Aorta (tissue), 5 donors: ENCODE measurements at regions of chr11 and their contacts with region 1.

Region 1: DNA sequence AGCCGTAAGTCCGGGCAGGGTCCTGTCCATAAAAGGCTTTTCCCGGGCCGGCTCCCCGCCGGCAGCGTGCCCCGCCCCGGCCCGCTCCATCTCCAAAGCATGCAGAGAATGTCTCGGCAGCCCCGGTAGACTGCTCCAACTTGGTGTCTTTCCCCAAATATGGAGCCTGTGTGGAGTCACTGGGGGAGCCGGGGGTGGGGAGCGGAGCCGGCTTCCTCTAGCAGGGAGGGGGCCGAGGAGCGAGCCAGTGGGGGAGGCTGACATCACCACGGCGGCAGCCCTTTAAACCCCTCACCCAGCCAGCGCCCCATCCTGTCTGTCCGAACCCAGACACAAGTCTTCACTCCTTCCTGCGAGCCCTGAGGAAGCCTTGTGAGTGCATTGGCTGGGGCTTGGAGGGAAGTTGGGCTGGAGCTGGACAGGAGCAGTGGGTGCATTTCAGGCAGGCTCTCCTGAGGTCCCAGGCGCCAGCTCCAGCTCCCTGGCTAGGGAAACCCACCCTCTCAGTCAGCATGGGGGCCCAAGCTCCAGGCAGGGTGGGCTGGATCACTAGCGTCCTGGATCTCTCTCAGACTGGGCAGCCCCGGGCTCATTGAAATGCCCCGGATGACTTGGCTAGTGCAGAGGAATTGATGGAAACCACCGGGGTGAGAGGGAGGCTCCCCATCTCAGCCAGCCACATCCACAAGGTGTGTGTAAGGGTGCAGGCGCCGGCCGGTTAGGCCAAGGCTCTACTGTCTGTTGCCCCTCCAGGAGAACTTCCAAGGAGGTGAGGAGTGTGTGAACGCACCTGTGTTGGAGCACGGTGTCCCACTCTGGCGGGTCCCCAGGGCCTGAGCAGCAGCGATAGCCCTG is at the start of gene TAGLN:
- DNase-seq: peak; percentile 95 to 97
- ATAC-seq: peak; percentile 86
- H3K4me3 ChIP-seq: peak within 1 kb of the TSS; percentile 46 to 98
- H3K27ac ChIP-seq: peak within 1 kb of the TSS; percentile 94 to 99
- H3K4me1 ChIP-seq: no peaks in the 10 kb centered on the region
- H3K27me3 ChIP-seq: no peaks in the 10 kb centered on the region
- total RNA-seq, gene TAGLN: 4,857 to 10,188 TPM

Region 2: DNA sequence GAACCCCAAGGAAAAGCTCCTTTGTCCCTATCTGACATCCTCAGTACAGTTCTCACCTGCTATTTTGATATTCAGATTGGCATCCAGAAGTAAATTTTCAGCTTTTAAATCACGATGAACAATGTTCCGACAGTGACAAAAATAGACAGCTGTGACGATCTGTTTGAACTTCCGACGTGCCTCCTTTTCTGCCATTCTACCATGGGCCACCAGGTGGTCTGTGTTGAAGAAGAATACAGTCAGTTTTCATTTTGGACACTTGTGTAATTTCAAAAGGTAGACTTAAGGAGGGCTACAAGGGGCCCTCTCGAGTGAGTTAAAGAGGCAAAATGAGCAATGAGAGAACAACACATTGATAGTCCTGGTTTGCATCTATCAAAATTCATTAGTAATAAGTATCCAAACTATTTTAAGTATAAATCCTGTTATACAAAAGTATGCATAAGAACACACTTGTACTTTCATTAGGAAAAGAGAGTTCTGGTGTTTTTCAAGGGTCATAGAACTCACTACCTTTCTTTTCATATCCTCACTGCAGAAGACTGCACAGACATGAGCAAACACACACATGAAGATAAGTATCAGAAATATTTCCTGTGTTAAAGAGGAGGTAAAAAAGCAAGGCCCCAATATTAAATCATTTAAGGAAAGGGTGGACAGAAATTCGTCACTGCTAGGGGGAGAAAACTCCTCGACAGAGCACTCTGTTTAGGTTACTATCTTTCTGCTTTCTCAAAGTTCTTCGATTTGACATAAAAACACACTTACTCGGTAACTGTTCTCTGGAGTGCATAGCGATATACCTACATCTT is 271.9 kb before region 1 on chr11:
- intact Hi-C with region 1: no loop called
- DNase-seq: no peak
- ATAC-seq: no peak
- H3K4me3 ChIP-seq: no peak overlapping the region
- H3K27ac ChIP-seq: no peak overlapping the region
- H3K4me1 ChIP-seq: no peaks in the 10 kb centered on the region
- H3K27me3 ChIP-seq: no peaks in the 10 kb centered on the region

Region 3: DNA sequence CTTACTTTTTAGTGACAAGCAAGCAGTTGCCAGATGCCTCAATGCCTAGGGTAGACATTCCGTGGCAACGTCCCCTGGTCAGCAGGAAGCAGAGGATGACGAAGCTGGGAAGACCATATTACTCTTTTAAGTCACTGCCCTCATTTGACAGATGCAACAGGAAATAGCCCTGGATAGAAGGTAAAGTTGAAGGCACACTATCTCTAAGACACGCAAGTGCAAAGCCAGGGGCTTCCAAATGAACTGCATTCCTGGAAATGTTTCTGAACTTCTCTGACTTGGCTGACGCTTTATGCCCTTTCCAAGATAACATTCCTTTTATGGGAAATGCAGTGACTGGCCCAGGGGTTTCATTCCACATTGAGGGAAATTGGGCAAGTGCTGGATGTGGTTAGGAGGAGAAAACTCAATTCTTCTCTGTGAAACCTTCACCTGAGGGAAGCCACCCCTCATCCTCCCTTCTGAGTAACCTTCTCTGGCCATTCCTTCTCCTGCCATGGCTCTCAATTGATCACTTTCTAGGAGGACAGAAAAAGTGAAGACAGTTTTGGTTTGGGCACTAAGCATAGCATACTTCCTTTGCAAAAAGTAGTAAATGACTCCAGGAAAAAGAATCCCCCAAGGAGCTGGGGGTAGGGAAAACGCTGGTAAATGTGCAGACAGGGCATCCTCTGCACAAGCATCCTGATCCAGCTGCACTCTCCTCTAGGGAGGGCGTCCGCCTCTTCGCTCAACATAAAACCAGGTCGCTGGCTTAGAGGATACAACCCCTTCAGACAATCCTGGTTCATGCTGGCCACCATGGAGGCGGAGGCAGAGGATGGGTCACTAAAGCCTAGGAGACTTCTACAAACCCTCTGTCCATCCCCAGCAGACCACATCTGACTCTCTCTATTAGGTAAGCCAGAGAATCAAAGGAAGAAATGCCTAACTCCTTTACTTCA is 18.1 kb after region 1 on chr11:
- intact Hi-C with region 1: loop called (anchors 1 to 2 kb)
- DNase-seq: peak in 1 of 2 donors; percentile 69
- ATAC-seq: peak; percentile 31
- H3K4me3 ChIP-seq: no peak overlapping the region
- H3K27ac ChIP-seq: peak overlapping the region; percentile 51 to 100
- H3K4me1 ChIP-seq: peaks cover 4 to 16% of the 10 kb centered on the region in 2 donors
- H3K27me3 ChIP-seq: no peaks in the 10 kb centered on the region